Panc1 (cell line): ENCODE measurements at regions of chr4 and their contacts with region 1.

Region 1: DNA sequence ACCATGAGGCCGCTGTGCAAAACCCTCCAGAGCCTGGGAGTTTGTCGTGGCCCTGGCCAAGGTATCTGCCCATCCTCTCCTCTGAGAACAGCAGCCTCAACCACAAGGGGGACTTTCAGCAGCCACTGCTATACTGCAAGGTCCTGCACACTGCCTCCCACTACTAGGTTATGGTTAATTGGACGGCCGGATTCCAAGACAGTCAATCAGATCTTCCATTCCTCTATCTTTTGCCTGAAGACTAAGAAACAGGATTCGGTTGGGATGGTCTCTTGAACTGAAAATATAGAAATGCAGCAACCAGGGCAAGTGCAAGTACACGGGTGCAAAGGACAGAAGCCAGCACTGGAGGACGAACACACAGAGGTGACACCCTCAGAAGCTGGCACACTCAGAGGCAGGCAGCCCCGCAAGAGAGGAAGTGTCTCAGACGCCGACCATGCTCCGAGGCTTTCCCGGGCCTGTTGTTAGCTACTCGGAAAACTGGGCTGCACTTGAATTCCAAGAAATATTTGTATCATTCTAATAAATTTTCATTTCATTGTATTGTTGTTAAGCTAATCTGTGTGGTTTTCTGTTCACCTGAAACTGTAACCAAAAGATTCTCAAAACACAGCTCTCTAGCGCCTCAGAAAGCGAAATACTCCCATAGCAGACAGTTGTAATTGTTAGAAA is 63.3 kb downstream of the AFAP1 start:
- DNase-seq: no peak
- ATAC-seq: peak; percentile 89
- H3K4me3 ChIP-seq: peak overlapping the region; percentile 10 to 37
- H3K27ac ChIP-seq: peak overlapping the region; percentile 90
- H3K4me1 ChIP-seq: peaks cover 86% of the 10 kb centered on the region
- H3K27me3 ChIP-seq: no peaks in the 10 kb centered on the region
- CTCF ChIP-seq: peak; percentile 66

Region 2: DNA sequence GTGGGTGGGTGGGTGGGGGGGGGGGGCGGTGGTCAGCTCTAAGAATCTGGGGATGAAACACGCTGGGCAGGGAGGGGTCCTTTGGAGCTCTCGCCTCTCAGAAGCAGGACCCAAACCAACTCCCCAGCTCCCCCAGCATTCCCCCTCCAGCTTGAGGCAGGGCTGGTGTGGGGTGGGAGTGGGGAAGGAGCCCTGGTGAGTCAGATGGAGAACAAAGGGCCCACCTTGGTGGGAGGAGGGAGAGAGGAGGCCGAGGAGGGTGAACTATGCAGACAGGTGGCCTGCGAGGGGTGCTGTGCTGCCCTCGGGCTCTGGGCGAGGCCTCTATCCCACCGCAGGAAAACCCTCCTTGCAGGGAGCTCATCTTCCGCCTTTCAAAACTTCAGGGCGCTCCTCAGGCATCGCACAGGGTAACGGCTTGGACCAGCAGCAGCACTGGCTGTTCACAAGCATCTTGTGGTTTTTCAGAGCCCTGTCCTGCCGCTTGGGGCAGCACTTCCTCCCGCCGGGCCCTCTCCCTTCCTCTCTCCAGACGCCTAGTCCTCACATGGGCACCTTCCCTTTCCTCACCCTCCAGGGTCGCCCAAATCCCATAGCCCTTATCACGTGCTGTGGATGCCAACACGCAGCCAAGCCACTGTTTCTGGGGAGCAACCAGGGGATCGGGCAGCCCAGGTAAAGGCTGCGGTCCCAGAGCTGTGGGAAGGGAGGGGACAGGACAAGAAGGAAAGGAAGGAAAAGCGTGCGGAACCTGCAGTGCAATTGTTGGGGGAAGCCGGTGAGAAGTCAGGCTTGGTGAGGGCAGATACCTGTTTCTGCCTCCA is 774.4 kb before region 1 on chr4:
- CTCF ChIA-PET with region 1: no interaction called
- POLR2A ChIA-PET with region 1: no interaction called
- in situ Hi-C with region 1: no loop called
- intact Hi-C with region 1: no loop called
- DNase-seq: no peak
- ATAC-seq: peak; percentile 89
- H3K4me3 ChIP-seq: peak overlapping the region; percentile 58 to 75
- H3K27ac ChIP-seq: no peak overlapping the region
- H3K4me1 ChIP-seq: no peaks in the 10 kb centered on the region
- H3K27me3 ChIP-seq: no peaks in the 10 kb centered on the region
- CTCF ChIP-seq: peak; percentile 88

Region 3: DNA sequence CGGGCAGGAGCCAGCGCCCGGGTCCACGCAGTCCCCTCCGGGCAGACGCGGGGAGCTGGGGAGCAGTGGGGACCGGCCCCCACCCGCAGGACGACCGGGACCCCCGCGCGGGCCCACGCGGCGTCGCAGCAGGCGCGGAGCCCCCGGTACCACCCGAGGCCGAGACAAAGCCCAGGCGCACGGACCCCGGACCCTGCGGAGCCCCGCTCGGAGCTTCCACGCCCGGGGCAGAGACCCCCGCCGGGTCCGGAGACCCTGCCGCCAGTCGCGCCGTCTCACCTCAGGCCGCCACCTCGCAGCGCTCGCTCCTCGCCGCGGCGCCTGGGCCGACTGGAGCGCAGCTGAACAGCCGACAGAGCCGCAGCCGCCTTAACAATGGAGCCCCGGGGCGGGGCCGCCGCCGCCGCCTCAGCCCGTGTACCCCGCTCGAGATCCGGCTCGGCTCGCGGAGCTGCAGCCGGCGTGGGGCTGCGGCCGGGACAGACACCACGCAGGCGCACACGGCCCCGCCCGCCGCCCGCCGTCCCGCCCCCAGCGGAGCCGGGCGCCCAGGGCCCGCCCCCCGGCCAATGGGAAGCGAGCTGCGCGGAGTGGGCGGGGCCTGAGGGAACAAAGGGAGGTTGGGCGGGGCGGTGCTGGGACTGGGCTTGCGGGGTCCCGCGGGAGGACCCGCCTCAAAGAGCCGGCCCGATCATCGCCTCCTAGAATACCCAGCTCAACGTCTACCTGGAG is 63.2 kb after region 1 on chr4 and contains the start of gene AFAP1:
- CTCF ChIA-PET with region 1: no interaction called
- POLR2A ChIA-PET with region 1: interaction called, 7 read pairs
- in situ Hi-C with region 1: no loop called
- intact Hi-C with region 1: loop called (anchors 10 kb)
- DNase-seq: no peak
- ATAC-seq: peak; percentile 87
- H3K4me3 ChIP-seq: peak within 1 kb of the TSS; percentile 64 to 79
- H3K27ac ChIP-seq: peak within 1 kb of the TSS; percentile 97
- H3K4me1 ChIP-seq: peaks cover 34% of the 10 kb centered on the region
- H3K27me3 ChIP-seq: no peaks in the 10 kb centered on the region
- CTCF ChIP-seq: no peak
- total RNA-seq, gene AFAP1: 94.7 TPM

Region 4: GRCh38 chr4:8126523-8126922 is 250.2 kb after region 1 on chr4:
- CTCF ChIA-PET with region 1: interaction called, 10 read pairs
- POLR2A ChIA-PET with region 1: no interaction called
- in situ Hi-C with region 1: no loop called
- intact Hi-C with region 1: no loop called
- DNase-seq: no peak
- ATAC-seq: no peak
- H3K4me3 ChIP-seq: no peak overlapping the region
- H3K27ac ChIP-seq: no peak overlapping the region
- H3K4me1 ChIP-seq: no peaks in the 10 kb centered on the region
- H3K27me3 ChIP-seq: no peaks in the 10 kb centered on the region
- CTCF ChIP-seq: no peak

Region 5: DNA sequence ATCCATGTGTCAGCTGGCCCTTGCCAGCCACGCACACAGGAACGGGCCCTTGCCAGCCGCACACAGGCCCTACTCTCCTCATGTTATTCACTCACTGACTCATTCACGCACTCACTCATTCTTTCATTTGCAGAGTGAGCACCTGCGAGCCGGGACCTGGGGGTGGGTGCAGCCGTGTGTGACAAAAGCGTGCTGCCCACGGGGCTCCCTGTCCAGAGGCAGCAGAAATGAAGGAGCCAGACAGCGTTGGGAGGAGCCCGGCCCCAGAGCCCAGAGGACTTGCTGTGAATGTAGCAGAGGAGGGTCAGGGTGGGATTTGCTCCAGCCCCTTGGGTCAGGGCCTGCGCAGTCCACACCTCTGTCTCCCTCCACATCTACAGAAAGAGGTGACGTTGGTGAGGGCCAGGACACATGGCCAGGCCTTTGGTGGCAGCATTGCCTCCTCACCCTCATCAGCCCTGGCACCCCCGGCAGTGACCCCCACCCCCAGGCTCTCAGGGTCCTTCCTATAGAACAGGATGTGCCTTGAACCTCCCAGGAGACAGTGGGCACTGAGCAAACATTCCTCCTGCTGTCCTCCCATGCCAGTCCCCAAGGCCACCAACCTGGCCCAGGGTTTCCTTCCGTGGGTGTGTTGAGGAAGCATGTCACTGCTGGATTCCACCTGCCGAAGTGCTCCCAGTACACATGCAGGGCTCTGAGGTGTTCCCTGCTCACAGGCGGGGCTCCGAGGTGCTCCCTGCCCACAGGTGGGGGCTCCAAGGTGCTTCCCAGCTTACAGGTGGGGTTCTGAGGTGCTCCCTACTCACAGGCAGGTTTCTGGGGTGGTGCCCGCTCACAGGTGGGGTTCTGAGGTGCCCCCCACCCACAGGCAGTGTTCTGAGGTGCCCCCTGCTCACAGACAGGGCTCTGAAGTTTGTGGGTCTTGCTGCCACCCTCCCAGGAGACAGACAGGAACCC is 889.6 kb after region 1 on chr4:
- CTCF ChIA-PET with region 1: no interaction called
- POLR2A ChIA-PET with region 1: no interaction called
- in situ Hi-C with region 1: no loop called
- intact Hi-C with region 1: no loop called
- DNase-seq: no peak
- ATAC-seq: 0 out of 2 replicates have a peak, but pooled peaks have one; percentile 43
- H3K4me3 ChIP-seq: no peak overlapping the region
- H3K27ac ChIP-seq: no peak overlapping the region
- H3K4me1 ChIP-seq: no peaks in the 10 kb centered on the region
- H3K27me3 ChIP-seq: no peaks in the 10 kb centered on the region
- CTCF ChIP-seq: no peak